Uterus (tissue), 4 donors: ENCODE measurements at regions of chr20 and their contacts with region 1.

Region 1: DNA sequence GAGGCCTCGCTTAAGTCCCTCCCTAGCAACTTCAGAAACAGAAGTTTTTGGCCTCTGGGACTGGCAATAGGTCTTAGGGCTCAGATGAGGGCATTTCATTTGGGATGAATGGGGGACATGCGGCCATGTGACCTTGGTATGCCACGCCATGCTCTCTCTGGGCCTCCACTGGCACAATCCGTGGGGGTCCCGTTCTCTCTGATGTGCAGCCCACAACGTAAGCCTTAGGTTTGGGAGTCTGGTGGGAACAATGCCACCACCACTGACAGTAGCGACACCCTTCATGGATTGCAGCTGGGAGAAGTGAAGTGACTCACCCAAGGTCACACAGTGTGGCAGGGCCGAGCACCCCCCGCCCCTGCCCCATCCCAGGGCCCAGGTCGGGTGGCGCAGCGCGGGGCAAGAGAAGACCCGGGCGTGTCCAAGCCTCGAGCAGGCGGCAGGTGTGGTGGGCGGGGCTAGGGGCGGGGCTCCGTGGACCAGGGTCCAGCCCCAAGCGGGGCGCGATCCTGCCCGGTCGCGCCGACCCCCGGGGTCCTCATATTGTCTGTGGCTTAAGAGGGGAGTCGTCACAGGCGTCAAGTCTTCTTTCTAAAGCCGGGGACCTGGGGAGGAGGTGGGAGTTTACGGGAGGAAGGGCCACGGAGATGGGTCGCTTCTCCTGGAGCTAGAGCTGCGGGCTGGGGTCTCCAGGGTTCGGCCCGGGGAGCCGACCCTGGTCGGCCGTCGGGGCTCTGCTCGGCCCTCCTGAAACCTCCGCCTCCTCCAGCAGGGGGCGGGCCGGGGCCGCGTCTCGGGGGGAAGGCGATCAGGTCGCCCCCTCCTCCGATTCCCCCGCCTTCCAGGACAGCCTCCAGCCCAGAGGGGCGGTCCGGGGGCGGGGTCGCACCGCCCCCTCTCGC is 698 bp upstream of the CEBPB start:
- DNase-seq: peak; percentile 91 to 94
- H3K4me3 ChIP-seq: peak overlapping the region; percentile 56 to 97
- H3K27ac ChIP-seq: peak overlapping the region; percentile 100
- H3K4me1 ChIP-seq: peaks cover 0 to 4% of the 10 kb centered on the region in 2 donors
- H3K27me3 ChIP-seq: no peaks in the 10 kb centered on the region
- CTCF ChIP-seq: peak; percentile 93 to 95 (median 94)
- POLR2A ChIP-seq: no peak

Region 2: GRCh38 chr20:50286609-50287008 is 96.7 kb after region 1 on chr20:
- intact Hi-C with region 1: loop called (anchors 10 kb)
- DNase-seq: peak; percentile 90 to 94
- H3K4me3 ChIP-seq: peak overlapping the region in 1 of 2 donors; percentile 6
- H3K27ac ChIP-seq: peak overlapping the region; percentile 98 to 99
- H3K4me1 ChIP-seq: peaks cover 27 to 30% of the 10 kb centered on the region in 2 donors
- H3K27me3 ChIP-seq: no peaks in the 10 kb centered on the region
- CTCF ChIP-seq: no peak
- POLR2A ChIP-seq: peak; percentile 24 to 41

Region 3: DNA sequence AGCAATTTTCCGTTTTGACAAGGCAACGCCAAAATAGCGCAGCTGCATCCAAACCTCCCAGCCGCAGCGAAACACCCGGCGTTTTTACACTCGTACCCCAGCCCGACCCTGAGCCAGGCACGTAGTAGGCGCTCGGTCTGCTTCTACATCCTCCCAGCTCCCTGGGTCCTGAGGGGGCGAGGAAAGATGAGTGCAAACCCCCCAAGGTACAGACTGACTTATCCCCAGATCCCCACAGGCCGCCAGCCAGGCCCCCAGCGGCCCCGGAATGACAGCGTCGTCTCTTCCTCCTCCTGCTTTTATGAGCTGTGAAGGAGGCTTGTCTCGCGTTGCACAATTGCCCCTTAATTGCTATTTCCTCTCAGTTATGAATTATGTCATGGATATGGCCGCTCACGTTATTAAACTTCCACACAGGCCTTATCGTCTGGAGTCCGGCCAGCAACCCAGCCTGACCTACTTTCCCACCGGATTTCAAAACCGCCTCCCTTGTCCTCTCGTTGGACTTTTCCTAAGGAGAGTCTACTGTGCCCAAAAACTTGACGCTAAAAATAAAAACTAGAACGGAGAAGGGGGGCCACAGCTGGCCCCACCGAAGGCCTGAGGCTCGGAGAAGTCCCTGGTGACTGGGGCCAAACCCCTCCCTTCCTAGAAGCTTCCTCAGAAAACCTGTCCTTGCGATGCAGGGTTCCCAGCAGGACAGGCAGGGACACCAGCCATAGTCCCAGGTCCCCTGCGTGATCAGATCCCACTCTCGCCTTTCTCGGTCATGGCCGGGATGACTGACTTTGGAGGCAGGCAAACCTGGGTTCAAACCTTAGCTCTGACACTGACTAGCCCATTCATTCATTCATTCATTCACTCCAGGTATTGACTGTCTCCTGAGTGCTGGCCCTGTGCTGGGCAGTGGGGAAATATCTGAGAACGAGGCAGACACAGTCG is 189.4 kb after region 1 on chr20:
- intact Hi-C with region 1: loop called (anchors 1 kb)
- DNase-seq: peak; percentile 96 to 98
- H3K4me3 ChIP-seq: no peak overlapping the region
- H3K27ac ChIP-seq: peak overlapping the region; percentile 77 to 85
- H3K4me1 ChIP-seq: peaks cover 6 to 10% of the 10 kb centered on the region in 2 donors
- H3K27me3 ChIP-seq: no peaks in the 10 kb centered on the region
- CTCF ChIP-seq: peak in 1 of 4 experiments; percentile 15
- POLR2A ChIP-seq: peak; percentile 32 to 52

Region 4: GRCh38 chr20:50395258-50395729 is 205.4 kb after region 1 on chr20:
- intact Hi-C with region 1: no loop called
- DNase-seq: peak; percentile 71 to 82
- H3K4me3 ChIP-seq: no peak overlapping the region
- H3K27ac ChIP-seq: peak overlapping the region; percentile 67 to 74
- H3K4me1 ChIP-seq: peaks cover 0 to 3% of the 10 kb centered on the region in 2 donors
- H3K27me3 ChIP-seq: no peaks in the 10 kb centered on the region
- CTCF ChIP-seq: no peak
- POLR2A ChIP-seq: peak; percentile 21 to 34

Region 5: DNA sequence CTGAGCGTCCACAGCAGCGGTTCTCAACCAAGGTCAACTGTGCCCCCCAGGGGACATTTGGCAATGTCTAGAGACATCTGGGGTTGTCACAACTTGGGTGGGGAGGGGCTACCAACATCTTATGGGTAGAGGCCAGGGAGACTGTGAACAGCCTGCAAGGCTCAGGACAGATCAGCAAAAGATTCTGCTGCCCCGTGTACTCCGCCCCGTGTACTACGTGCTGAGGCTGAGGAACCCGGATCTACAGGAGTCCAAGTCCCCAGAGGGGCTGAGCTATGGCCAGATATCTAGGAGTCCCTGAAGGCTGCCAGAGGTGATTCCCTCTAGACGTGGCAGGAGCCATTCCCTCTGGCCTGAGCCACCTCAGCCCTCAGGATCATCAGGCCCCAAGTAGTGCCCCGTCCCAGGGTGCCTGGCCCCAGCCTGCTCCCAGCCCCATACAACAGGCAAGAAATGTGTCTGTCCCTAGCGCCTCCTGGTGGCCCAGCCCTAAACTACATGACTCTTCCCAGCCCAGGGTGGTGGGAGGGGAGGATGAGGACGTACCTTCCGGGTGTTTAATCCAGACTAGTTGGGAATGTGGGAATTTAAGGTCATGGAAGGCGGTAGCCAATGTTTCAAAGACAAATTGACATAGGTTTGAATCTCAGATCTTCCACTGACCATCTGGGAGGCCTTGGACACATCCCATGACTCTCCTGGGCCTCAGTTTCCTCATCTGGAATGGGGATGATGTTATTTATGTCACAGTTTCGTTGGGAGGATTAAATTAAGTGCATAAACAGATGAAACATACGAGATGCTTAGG is 270.7 kb after region 1 on chr20:
- intact Hi-C with region 1: loop called (anchors 5 kb)
- DNase-seq: peak; percentile 91 to 92
- H3K4me3 ChIP-seq: no peak overlapping the region
- H3K27ac ChIP-seq: peak overlapping the region; percentile 56 to 57
- H3K4me1 ChIP-seq: no peaks in the 10 kb centered on the region
- H3K27me3 ChIP-seq: no peaks in the 10 kb centered on the region
- CTCF ChIP-seq: peak; percentile 90 to 98 (median 95)
- POLR2A ChIP-seq: peak in 1 of 2 donors; percentile 17

Region 6: GRCh38 chr20:50575847-50576720 is 386.2 kb after region 1 on chr20:
- intact Hi-C with region 1: loop called (anchors 5 kb)
- DNase-seq: peak; percentile 64 to 69
- H3K4me3 ChIP-seq: no peak overlapping the region
- H3K27ac ChIP-seq: peak overlapping the region in 1 of 2 donors; percentile 45
- H3K4me1 ChIP-seq: peaks cover 0 to 11% of the 10 kb centered on the region in 2 donors
- H3K27me3 ChIP-seq: no peaks in the 10 kb centered on the region
- CTCF ChIP-seq: peak; percentile 66 to 77 (median 74)
- POLR2A ChIP-seq: no peak